A673 (cell line): ENCODE measurements at regions of chr3 and their contacts with region 1.

Region 1: GRCh38 chr3:175464362-175464761 is 605.2 kb downstream of the NAALADL2 start:
- DNase-seq: no peak
- H3K4me3 ChIP-seq: no peak overlapping the region
- H3K27ac ChIP-seq: no peak overlapping the region
- H3K4me1 ChIP-seq: no peaks in the 10 kb centered on the region
- H3K27me3 ChIP-seq: no peaks in the 10 kb centered on the region
- CTCF ChIP-seq: no peak

Region 2: DNA sequence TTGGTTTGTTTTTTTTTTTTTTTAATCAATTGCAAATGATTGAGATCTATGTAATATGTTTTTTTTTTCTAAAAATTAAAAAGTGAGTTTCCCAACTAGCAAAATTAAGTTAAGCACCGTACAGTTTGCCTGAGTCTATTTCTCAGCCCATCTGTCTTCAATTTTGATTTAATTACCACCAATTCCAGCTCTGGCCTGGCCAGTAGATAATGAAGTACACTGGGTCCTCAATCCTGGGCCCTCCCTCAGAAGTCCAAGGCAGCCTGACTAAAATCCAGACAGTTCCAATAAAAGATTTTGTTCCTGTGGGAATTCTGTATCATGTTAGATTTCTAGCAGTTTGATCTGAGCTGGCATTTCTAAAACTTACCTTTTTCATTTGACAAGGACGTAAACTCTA is 281.9 kb after region 1 on chr3:
- CTCF ChIA-PET with region 1: no interaction called
- POLR2A ChIA-PET with region 1: interaction called, 14 read pairs
- intact Hi-C with region 1: no loop called
- DNase-seq: no peak
- H3K4me3 ChIP-seq: no peak overlapping the region
- H3K27ac ChIP-seq: no peak overlapping the region
- H3K4me1 ChIP-seq: no peaks in the 10 kb centered on the region
- H3K27me3 ChIP-seq: no peaks in the 10 kb centered on the region
- CTCF ChIP-seq: no peak